AG04449 (cell line): ENCODE measurements at regions of chr21 and their contacts with region 1.

Region 1: DNA sequence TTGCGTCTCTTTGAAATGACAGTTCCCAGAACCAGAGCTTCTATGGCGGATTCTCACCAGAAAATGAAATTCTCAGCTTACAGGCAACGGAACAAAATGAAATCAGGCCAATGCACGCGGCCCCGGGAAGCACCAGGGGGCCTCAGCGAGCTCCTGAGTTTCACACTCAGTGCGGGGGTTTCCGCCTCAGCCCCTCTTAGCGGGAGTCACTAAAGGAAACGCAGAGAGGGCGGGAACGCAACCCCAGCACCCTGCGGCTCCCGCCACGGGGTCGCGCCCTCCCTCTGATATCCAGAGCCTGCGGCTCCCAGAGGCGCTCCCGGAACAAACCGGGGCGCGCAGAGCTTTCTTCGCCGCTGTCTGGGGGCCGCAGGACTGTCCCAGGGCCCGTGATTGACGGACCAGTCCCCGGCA is 7.9 kb upstream of the COL6A1 start:
- DNase-seq: no peak
- H3K4me3 ChIP-seq: peak overlapping the region; percentile 44
- CTCF ChIP-seq: peak; percentile 86

Region 2: DNA sequence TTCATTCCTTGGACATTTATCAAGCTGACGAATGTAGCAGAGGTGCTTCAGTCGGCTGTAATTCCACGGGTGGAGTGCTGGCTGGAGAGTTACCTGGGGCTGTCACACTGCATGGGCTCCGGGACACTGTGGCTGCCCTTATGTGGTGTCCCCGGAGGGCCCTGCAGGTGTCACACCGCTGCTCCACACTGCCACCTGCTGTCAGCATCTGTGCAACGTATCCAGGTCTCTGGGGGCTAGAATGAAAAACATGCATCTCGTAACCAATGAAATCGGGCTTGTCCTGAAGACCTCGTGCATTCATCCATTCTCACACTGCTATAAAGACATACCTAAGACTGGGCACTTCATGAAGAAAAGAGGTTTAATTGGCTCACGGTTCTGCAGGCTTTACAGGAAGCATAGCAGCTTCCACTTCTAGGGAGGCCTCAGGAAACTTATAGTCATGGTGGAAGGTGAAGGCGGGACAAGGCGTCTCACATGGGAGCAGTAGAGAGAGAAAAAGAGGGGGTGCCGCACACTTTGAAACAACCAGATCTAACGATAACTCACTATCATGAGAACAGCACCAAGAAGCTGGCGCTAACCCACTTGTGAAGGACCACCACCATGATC is 376.9 kb before region 1 on chr21:
- CTCF ChIA-PET with region 1: no interaction called
- POLR2A ChIA-PET with region 1: no interaction called
- DNase-seq: no peak
- H3K4me3 ChIP-seq: no peak overlapping the region
- CTCF ChIP-seq: peak; percentile 89

Region 3: DNA sequence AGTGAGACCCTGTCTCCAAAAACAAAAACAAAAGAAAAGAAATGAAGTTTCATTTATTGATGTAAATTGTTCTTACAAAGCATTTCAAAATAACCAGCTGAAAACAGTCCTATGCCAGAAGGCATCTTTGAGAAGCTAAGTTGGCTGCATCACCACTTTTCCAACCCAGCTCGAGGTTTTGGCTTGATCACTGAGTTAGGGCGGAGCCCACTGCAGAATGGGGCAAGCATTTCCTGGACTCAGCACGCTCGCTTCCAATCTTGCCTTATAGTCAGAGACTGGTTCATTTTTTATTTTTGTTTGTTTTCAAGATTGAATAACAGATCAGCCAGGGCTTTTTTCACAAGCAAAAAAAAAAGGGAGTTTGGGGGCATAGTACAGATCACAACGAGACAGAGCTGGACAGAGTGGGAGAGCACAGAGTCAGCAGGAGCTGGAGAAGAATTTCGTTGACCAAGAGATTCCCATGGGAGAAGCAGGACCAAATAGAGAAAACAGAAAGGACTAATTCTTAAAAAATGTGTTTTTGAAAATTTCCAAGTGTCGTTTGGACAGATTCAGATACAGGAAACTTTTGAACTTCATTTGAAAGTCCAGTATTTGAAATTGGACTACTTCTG is 15.6 kb before region 1 on chr21:
- CTCF ChIA-PET with region 1: interaction called, 22 read pairs
- POLR2A ChIA-PET with region 1: interaction called, 3 read pairs
- DNase-seq: no peak
- H3K4me3 ChIP-seq: no peak overlapping the region
- CTCF ChIP-seq: no peak

Region 4: DNA sequence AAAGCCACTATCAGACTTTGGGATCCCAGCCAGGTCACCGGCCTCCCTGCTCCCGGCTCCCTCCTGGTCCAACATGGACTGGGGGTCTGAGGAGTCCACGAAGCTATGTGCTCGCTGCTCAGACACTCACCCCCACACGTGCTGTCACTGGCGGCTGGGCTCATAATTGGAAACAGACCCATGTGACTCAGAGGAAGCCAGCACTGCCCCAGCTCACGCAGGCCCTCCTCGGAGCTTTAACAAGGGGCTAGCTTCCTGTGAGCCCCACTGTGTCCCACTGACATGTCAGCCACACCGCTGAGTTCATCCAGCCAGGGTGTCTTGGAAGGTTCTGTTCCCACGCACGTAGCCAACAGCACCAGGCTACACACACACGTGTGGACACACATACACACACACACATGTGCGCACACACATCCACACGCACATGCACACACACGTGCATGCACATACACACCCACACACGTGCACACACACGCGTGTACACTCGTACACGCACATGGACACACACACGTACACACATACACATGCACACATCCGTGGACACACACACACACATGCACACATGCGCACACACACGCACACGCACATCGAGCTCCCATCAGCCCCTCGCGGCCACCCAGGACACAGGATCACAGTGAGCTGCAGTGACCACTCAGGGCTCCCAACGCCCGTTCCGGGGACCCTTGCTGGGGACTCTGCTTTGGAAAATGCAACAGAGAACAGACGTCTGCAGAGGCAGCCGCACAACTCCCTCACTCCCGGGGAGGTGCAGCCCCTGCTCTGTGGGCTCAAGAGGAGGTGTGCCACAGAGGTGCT is 105.9 kb after region 1 on chr21:
- CTCF ChIA-PET with region 1: interaction called, 23 read pairs
- POLR2A ChIA-PET with region 1: interaction called, 8 read pairs
- DNase-seq: peak; percentile 76
- H3K4me3 ChIP-seq: no peak overlapping the region
- CTCF ChIP-seq: no peak

Region 5: GRCh38 chr21:46097336-46098293 is 123.9 kb after region 1 on chr21 and contains the start of gene COL6A2:
- CTCF ChIA-PET with region 1: interaction called, 63 read pairs
- POLR2A ChIA-PET with region 1: interaction called, 26 read pairs
- DNase-seq: no peak
- H3K4me3 ChIP-seq: peak within 1 kb of the TSS; percentile 81
- CTCF ChIP-seq: peak; percentile 26

Region 6: GRCh38 chr21:46116776-46117585 is 143.3 kb after region 1 on chr21:
- CTCF ChIA-PET with region 1: interaction called, 59 read pairs
- POLR2A ChIA-PET with region 1: interaction called, 8 read pairs
- DNase-seq: no peak
- H3K4me3 ChIP-seq: no peak overlapping the region
- CTCF ChIP-seq: no peak

Region 7: DNA sequence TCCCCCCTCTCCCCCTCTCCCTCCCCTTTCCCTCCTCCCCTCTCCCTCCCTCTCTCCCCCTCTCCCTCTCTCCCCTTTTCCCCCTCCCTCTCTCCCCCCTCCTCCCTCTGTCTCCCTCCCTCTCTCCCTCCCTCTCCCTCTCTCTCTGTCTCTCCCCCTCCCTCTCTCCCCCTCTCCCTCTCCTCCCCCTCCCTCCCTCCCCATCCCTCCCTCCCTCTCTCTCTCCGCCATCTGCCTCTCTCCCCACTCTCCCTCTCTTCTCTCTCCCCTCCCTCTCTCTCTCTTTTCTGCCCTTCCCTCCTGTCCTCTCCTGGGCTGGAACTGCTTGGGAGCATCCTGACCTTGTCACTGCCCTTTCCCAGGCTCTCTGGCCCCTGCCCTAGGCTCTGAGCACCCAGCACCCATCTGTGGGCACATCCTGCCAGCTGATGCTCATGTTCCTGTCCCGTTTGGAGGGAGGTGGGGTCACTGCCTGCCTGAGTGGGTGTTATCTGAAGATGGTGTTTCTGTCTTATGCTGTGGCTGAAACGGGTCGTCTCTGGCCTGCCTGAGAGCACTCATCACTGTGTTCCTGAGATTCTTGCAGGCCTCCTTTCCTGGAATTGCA is 170.9 kb after region 1 on chr21:
- CTCF ChIA-PET with region 1: interaction called, 73 read pairs
- POLR2A ChIA-PET with region 1: interaction called, 3 read pairs
- DNase-seq: no peak
- H3K4me3 ChIP-seq: no peak overlapping the region
- CTCF ChIP-seq: no peak